MCF 10A (cell line): ENCODE measurements at regions of chr5 and their contacts with region 1.

Region 1: DNA sequence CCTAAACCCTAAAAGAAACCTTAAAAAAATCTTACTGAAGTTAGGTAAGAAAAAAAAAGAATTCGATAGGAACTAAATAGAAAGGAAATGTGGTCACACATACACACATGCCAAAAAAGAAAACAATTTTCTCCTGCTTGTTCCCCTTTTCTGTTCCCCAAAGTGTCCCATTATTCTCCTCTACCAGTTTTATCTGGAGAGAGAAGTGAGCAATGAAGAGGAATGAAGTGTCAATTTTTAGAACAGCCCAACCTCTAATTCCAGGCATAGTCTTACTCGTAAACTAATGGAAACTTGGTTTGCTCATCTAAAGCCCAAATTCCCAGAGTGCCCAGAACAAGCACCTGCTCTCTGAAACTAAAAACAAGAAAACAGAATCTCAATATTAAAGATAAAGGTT is 26.1 kb downstream of the AP3B1 start:
- DNase-seq: no peak
- H3K4me3 Mint-ChIP-seq: no peak overlapping the region
- H3K27ac Mint-ChIP-seq: no peak overlapping the region
- H3K4me1 Mint-ChIP-seq: peaks cover 9% of the 10 kb centered on the region
- H3K27me3 Mint-ChIP-seq: no peaks in the 10 kb centered on the region
- CTCF ChIP-seq: no peak

Region 2: DNA sequence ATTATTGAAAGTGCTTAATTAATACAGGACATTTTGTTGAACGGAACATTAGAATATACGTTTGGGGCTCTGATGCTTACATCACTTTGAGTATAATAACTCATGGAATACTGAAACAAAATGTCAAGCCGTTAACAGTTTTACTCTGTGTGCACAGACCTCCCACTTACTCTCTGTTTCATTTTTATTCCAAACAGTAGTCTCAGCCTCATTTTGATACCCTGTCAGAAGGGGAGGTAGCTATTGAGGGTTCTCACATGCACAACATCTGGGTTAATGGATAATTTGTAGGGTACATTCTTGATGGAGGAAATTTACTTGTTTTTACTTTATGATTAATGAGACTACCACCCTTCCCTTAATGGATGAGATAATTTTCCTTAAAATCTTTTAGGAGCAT is 151.0 kb after region 1 on chr5:
- CTCF ChIA-PET with region 1: interaction called, 10 read pairs
- POLR2A ChIA-PET with region 1: no interaction called
- intact Hi-C with region 1: no loop called
- DNase-seq: no peak
- H3K4me3 Mint-ChIP-seq: no peak overlapping the region
- H3K27ac Mint-ChIP-seq: no peak overlapping the region
- H3K4me1 Mint-ChIP-seq: no peaks in the 10 kb centered on the region
- H3K27me3 Mint-ChIP-seq: no peaks in the 10 kb centered on the region
- CTCF ChIP-seq: no peak